Activated naive CD4-positive, alpha-beta T cell treated with anti-CD3 and anti-CD28 coated beads for 36 hours (primary cell): ENCODE measurements at regions of chr18 and their contacts with region 1.

Region 1: GRCh38 chr18:70659036-70659925 is 370.4 kb downstream of the SOCS6 start:
- DNase-seq: peak; percentile 79
- H3K4me3 Mint-ChIP-seq: peak overlapping the region; percentile 73
- H3K27ac Mint-ChIP-seq: peak overlapping the region; percentile 73
- H3K4me1 Mint-ChIP-seq: peaks cover 51% of the 10 kb centered on the region
- H3K27me3 Mint-ChIP-seq: no peaks in the 10 kb centered on the region

Region 2: DNA sequence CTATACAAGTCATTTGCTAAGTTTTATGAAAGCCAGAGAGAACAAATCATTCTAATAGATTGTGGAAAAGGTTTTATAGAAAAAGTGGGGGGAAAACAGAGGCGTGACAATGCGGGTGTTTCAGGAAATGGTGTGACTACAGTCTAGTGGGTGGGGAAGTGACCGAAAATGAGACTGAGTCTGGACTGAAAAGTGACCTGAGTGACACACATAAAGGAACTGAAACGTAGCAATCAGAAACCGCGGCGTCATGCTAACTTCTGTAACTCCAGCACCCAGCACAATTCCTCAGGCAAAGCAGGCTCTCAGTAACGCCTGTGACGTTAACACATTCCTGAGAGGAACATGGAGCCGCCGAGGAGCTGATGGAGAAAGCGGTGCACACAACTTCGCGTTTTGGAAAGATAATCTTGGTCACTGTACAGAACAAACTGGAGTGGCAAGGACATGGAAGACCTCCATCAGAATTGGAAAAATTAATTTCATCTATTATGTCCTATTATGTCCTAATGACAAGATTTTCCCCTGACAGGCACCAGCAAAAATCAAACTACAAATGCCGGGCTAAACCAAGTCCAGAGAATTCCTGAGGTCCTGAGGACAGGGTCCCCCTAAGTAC is 710.3 kb before region 1 on chr18:
- CTCF ChIA-PET with region 1: no interaction called
- intact Hi-C with region 1: loop called (anchors 10 kb)
- DNase-seq: peak; percentile 83
- H3K4me3 Mint-ChIP-seq: no peak overlapping the region
- H3K27ac Mint-ChIP-seq: no peak overlapping the region
- H3K4me1 Mint-ChIP-seq: peaks cover 46% of the 10 kb centered on the region
- H3K27me3 Mint-ChIP-seq: no peaks in the 10 kb centered on the region

Region 3: DNA sequence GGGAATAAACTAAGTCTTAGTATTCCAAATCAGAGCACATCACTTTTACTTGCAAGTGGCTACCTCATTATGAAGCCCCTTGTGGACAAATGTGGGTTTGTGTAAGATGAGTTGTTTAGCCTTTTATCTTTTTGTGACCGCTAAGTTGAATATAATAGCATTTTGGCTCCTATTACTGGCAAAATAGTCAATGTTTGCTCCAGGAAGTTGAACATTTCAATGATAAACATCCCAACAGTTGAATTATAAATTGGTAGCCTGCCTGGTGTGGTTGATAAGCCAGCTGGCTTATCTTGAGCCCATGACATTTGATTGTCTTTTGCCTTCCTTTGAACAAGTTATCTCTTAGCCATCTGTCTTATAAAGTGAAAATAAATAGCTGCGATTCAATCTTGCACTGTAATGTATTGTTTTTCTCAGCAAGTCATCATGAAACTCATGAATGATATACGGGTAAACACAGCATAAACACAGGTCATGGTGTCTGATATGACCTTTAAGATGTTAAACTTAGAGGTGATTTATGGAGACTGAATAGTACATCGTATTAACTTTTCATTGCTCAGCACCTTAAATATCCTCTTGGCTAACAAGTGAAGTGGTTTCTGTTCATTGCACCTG is 32.0 kb before region 1 on chr18:
- CTCF ChIA-PET with region 1: interaction called, 3 read pairs
- intact Hi-C with region 1: loop called (anchors 2 kb)
- DNase-seq: no peak
- H3K4me3 Mint-ChIP-seq: peak overlapping the region; percentile 22
- H3K27ac Mint-ChIP-seq: peak overlapping the region; percentile 1
- H3K4me1 Mint-ChIP-seq: peaks cover 65% of the 10 kb centered on the region
- H3K27me3 Mint-ChIP-seq: no peaks in the 10 kb centered on the region

Region 4: DNA sequence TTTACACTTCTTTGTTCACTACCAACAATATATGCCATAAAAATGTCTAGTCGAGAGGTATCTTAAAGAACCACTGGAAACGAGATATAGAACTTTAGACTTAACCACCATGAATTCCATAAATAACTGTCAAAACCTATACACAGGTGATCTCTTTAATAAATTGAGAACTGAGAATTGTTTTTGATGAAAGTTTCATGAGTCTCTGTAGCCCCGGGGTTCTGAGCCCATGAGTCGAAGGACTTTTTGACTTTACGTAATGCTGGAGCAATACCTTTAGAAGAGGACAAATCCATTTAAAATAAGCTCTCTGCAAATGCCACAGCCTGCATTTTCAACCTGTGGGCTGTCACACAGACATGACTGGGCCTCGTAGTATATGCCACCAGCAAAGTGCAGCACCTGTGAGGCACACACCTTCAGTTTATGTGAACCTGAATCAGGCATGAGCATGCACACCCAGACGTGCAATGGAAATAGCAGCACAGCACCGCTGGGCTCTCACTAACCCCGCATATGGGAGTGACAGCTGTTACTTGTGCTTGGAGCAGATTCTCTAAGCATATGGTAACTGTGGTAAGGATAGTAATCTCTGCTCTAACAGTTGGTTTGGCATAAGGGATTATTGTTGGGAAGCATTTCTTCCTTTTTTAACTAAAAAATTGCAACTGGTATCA is 12.7 kb after region 1 on chr18:
- CTCF ChIA-PET with region 1: interaction called, 3 read pairs
- intact Hi-C with region 1: loop called (anchors 1 kb)
- DNase-seq: peak; percentile 24
- H3K4me3 Mint-ChIP-seq: peak overlapping the region; percentile 14
- H3K27ac Mint-ChIP-seq: peak overlapping the region; percentile 38
- H3K4me1 Mint-ChIP-seq: peaks cover 40% of the 10 kb centered on the region
- H3K27me3 Mint-ChIP-seq: no peaks in the 10 kb centered on the region

Region 5: GRCh38 chr18:70683263-70683662 is 24.0 kb after region 1 on chr18:
- CTCF ChIA-PET with region 1: no interaction called
- intact Hi-C with region 1: loop called (anchors 1 kb)
- DNase-seq: no peak
- H3K4me3 Mint-ChIP-seq: peak overlapping the region; percentile 48
- H3K27ac Mint-ChIP-seq: peak overlapping the region; percentile 86
- H3K4me1 Mint-ChIP-seq: peaks cover 31% of the 10 kb centered on the region
- H3K27me3 Mint-ChIP-seq: no peaks in the 10 kb centered on the region